CD8-positive, alpha-beta T cell (primary cell): ENCODE measurements at regions of chr3 and their contacts with region 1.

Region 1: GRCh38 chr3:182746959-182747358 is 46.3 kb upstream of the ATP11B start:
- DNase-seq: no peak
- ATAC-seq: no peak
- H3K4me3 ChIP-seq: no peak overlapping the region
- H3K4me3 Mint-ChIP-seq: no peak overlapping the region
- H3K27ac ChIP-seq: no peak overlapping the region
- H3K27ac Mint-ChIP-seq: no peak overlapping the region
- H3K4me1 ChIP-seq: no peaks in the 10 kb centered on the region
- H3K4me1 Mint-ChIP-seq: no peaks in the 10 kb centered on the region
- H3K27me3 ChIP-seq: no peaks in the 10 kb centered on the region
- H3K27me3 Mint-ChIP-seq: no peaks in the 10 kb centered on the region
- CTCF ChIP-seq: no peak

Region 2: GRCh38 chr3:182760576-182761164 is 13.7 kb after region 1 on chr3:
- CTCF ChIA-PET with region 1: no interaction called
- POLR2A ChIA-PET with region 1: no interaction called
- intact Hi-C with region 1: loop called in 1 of 2 experiments (anchors 1 kb)
- DNase-seq: no peak
- ATAC-seq: no peak
- H3K4me3 ChIP-seq: no peak overlapping the region
- H3K4me3 Mint-ChIP-seq: no peak overlapping the region
- H3K27ac ChIP-seq: no peak overlapping the region
- H3K27ac Mint-ChIP-seq: no peak overlapping the region
- H3K4me1 ChIP-seq: no peaks in the 10 kb centered on the region
- H3K4me1 Mint-ChIP-seq: no peaks in the 10 kb centered on the region
- H3K27me3 ChIP-seq: no peaks in the 10 kb centered on the region
- H3K27me3 Mint-ChIP-seq: no peaks in the 10 kb centered on the region
- CTCF ChIP-seq: no peak

Region 3: GRCh38 chr3:184040010-184040409 is 1293.1 kb after region 1 on chr3:
- CTCF ChIA-PET with region 1: no interaction called
- POLR2A ChIA-PET with region 1: no interaction called
- intact Hi-C with region 1: no loop called
- DNase-seq: no peak
- ATAC-seq: no peak
- H3K4me3 ChIP-seq: no peak overlapping the region
- H3K4me3 Mint-ChIP-seq: no peak overlapping the region
- H3K27ac ChIP-seq: no peak overlapping the region
- H3K27ac Mint-ChIP-seq: no peak overlapping the region
- H3K4me1 ChIP-seq: no peaks in the 10 kb centered on the region
- H3K4me1 Mint-ChIP-seq: no peaks in the 10 kb centered on the region
- H3K27me3 ChIP-seq: no peaks in the 10 kb centered on the region
- H3K27me3 Mint-ChIP-seq: peaks cover 2% of the 10 kb centered on the region
- CTCF ChIP-seq: no peak